Sciatic nerve (tissue), 2 donors: ENCODE measurements at regions of chr15 and their contacts with region 1.

Region 1: DNA sequence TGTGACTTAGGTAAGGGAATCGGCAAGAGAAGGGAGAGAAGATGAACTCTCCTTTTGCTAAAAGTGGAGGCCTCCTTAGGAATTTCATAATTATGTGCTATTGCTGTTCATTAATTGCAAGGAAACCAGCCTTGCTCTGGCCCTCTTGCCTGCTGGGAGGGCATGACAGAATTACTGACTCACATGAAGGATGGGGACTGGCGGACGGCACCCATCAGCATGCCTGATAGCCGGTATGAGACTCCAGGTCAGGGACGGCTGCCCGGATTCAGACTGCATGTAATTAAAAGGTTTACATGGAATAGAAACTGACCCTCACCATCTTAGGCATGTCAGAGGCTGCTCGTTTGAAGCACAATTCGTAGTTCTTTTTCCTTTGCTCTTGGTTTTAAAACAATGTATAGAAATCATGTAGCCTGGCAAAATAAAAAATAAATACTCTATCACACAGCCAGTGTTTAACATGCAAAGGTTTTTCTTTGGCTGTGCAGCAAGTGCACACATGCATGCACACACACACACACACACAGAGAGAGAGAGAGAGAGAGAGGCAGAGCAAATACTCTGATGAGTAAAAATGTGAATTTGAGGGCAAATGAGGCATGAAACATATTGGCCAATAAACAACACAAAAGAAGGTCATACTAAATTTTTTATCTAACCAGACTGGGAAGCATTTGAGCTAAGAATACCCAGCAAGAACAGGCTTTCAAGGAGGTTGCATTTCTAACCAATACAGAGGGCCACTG is 82.7 kb downstream of the FOXB1 start:
- DNase-seq: no peak
- ATAC-seq: no peak

Region 2: GRCh38 chr15:59976480-59977271 is 110.2 kb before region 1 on chr15:
- intact Hi-C with region 1: loop called (anchors 5 kb)
- DNase-seq: no peak
- ATAC-seq: no peak

Region 3: GRCh38 chr15:60047701-60048100 is 39.2 kb before region 1 on chr15:
- intact Hi-C with region 1: no loop called
- DNase-seq: no peak
- ATAC-seq: no peak

Region 4: GRCh38 chr15:60062826-60063225 is 24.0 kb before region 1 on chr15:
- intact Hi-C with region 1: no loop called
- DNase-seq: no peak
- ATAC-seq: no peak

Region 5: DNA sequence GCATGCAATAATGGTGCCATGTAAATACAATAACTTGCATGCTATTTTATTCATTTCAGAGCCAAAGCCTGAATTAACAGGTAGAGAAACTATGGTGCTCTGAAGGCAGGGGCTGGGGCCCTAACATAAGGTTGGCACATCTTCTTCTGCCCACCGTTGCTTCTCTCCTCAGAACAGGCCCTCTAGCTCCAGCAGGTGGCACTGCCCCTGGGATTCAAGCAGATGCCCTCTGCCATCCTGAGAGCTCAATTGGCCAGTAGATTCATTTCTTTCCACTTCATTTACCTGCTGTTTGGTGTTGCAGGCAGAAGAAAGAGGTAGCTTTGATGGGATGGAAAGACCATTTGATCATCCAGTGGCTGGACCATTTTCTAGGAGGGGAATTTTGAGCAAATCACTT is 47.8 kb after region 1 on chr15:
- intact Hi-C with region 1: no loop called
- DNase-seq: no peak
- ATAC-seq: no peak

Region 6: DNA sequence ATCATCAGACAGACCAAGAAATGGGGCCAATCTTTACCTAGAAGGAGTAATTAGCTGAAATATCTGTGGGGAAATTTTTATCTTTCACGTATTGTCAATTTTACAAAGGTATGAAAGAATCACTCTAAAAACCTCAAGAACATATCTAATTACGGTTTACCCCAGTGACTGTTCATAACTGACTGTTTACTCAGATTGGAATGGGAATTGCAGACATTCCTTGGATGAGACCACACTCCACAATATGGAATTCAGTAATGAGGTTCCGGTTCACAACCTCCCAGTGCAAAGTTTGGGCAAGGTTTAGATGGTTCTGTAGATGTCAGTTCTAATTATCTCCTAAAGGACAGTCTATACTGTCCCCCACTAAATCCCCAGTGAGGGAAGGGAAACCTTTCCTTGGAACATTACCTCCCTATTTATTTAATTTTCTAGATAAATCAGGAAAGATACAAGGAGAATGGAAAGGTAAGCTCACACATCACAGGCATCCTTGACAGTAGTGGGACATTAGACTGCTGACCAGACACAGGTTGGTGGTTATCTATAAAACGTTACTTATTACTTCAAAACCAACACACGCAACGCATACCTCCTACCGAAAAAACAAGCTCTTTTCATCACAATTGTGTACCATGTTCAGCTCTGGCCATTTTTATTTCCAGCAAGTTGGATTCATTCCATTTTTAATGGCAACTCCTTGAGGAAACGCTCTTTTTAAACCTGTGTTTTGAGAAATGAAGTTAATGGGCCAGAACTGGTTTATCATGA is 1012.4 kb after region 1 on chr15:
- intact Hi-C with region 1: no loop called
- DNase-seq: no peak
- ATAC-seq: no peak